ENCODE measurements at regions of chr6 and their contacts with region 1.

Region 1: DNA sequence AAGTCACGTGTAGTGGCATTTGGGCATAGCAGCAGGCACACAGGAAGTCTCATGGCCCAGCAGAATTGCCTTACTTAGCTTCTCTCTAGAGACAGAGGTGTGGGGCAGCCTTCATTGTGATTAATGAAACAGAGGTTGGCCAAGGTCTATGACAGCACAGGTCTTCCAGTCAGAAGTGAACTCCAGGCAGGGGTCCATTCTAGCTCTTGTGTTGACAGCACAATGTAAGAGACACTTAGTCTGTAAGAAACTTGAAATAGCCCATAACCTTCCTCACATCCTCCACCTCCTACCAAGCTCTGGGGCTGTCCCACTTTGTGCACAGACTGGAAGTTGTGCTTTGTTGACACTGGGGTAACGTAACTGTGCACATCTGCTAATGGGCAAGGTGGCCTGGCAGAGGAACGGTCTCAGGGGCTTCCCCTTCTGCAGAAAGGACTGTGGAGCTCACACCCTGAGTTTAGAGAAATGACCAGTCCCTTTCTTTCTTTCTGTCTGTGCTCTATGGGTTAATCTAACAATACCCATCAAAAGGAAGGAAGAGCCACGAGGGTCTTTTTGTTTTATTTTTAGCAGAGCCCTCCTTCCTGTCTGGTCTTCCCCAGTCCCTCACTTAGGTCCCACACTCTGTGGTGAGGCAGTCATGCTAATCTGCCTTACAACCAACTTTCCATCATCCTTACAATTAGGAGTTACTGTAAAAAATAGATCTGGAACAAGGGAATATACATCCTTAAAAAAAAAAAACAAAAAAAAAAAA is 35.6 kb upstream of the TAGAP start:
- DNase-seq: no peak
- ATAC-seq: peak; percentile 63
- H3K4me3 ChIP-seq: no peak overlapping the region
- H3K4me3 Mint-ChIP-seq: peak overlapping the region in 3 of 10 donors; percentile 28 to 47 (median 32)
- H3K27ac ChIP-seq: no peak overlapping the region
- H3K27ac Mint-ChIP-seq: peak overlapping the region in 6 of 9 donors; percentile 9 to 86 (median 68)
- H3K4me1 ChIP-seq: peaks cover 8 to 22% of the 10 kb centered on the region in 2 donors
- H3K4me1 Mint-ChIP-seq: peaks cover 16 to 43% (median 29%) of the 10 kb centered on the region in 7 donors
- H3K27me3 ChIP-seq: no peaks in the 10 kb centered on the region
- H3K27me3 Mint-ChIP-seq: peaks cover 0 to 7% (median 0%) of the 10 kb centered on the region in 5 donors

Region 2: DNA sequence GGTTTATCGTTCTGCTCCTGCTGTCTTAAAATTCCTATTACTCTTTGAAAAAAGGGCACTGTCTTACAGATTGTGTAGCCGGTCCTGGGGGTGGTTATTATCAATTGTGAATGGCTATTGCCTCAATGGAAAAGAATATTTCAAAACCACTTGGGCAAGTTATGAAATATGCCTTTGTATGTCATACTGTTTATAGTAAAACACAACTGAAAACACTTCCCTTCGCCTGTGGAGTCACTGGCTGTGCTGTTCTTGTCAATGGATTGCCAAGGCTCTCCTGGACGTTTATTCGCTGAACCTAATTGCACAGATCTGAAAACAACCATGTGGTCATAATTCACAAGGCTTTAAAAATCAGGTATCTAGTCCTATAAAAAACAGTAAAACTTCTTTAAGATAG is 12.2 kb after region 1 on chr6:
- CTCF ChIA-PET with region 1: interaction called, 3 read pairs
- POLR2A ChIA-PET with region 1: interaction called, 7 read pairs
- intact Hi-C with region 1: loop called in 1 of 2 experiments (anchors 1 kb)
- DNase-seq: no peak
- ATAC-seq: peak; percentile 33
- H3K4me3 ChIP-seq: no peak overlapping the region
- H3K4me3 Mint-ChIP-seq: peak overlapping the region in 1 of 10 donors; percentile 35
- H3K27ac ChIP-seq: no peak overlapping the region
- H3K27ac Mint-ChIP-seq: peak overlapping the region in 4 of 9 donors; percentile 36 to 93 (median 47)
- H3K4me1 ChIP-seq: peaks cover 9 to 28% of the 10 kb centered on the region in 2 donors
- H3K4me1 Mint-ChIP-seq: peaks cover 24 to 49% (median 43%) of the 10 kb centered on the region in 7 donors
- H3K27me3 ChIP-seq: no peaks in the 10 kb centered on the region
- H3K27me3 Mint-ChIP-seq: no peaks in the 10 kb centered on the region